Keratinocyte (primary cell): ENCODE measurements at regions of chr5 and their contacts with region 1.

Region 1: DNA sequence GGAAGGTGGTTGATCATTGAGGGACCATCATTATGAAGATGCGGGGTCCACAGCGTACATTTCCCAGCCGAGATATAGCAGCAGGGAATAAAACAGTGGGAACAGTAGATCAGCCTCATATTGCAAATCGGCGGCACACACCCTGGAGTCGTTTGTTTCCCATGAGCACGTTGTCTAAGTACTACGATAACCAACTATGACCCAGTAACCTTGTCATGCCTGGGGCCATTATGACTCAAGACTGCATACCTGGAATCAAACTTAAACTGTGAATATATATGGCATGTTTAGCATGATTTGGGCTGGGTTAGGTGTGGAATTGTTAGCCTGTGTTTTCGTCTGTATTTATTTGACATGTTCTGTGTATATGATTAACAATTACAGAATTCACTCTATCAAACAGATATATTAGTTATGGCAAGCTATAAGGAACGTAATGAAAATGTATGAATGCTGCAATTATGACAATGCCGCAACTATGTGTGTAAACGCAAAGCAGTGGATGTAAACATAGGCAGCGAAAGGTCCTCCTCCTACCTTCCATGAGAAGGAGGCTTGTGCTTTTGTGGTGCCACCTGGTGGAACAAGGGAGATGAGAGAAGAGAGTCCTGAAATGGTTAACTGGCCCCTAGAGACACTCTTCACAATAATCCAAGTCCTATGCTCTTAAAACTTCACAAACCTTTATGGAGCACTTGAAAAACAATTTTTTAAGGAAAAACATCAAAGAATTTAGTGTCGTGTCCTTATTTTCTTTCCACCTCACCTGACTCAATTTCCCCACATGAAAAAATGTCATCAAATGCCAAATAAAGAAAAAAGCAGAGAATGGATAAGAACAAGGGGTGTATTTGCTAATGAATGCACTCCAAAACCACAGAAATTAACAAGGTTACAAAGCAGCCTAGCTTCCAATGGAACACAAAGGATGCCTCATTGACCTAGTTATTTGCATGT is 47.1 kb downstream of the SEMA5A start:
- DNase-seq: peak; percentile 60
- H3K4me3 ChIP-seq: peak overlapping the region in 1 of 3 experiments; percentile 25
- H3K27ac ChIP-seq: no peak overlapping the region
- H3K4me1 ChIP-seq: peaks cover 5% of the 10 kb centered on the region
- H3K27me3 ChIP-seq: no peaks in the 10 kb centered on the region
- CTCF ChIP-seq: peak; percentile 62 to 76 (median 75)

Region 2: GRCh38 chr5:9222054-9222976 is 276.5 kb before region 1 on chr5:
- dilution Hi-C with region 1: no loop called
- DNase-seq: no peak
- H3K4me3 ChIP-seq: no peak overlapping the region
- H3K27ac ChIP-seq: no peak overlapping the region
- H3K4me1 ChIP-seq: no peaks in the 10 kb centered on the region
- H3K27me3 ChIP-seq: no peaks in the 10 kb centered on the region
- CTCF ChIP-seq: no peak

Region 3: GRCh38 chr5:9361835-9362234 is 137.0 kb before region 1 on chr5:
- dilution Hi-C with region 1: loop called (anchors 25 kb)
- DNase-seq: peak; percentile 50
- H3K4me3 ChIP-seq: no peak overlapping the region
- H3K27ac ChIP-seq: no peak overlapping the region
- H3K4me1 ChIP-seq: peaks cover 7% of the 10 kb centered on the region
- H3K27me3 ChIP-seq: no peaks in the 10 kb centered on the region
- CTCF ChIP-seq: peak; percentile 79 to 92 (median 88)